PC-9 (cell line): ENCODE measurements at regions of chr13 and their contacts with region 1.

Region 1: GRCh38 chr13:44068737-44069136 is 189.0 kb downstream of the LACC1 start:
- DNase-seq: peak in 1 of 2 experiments; percentile 79
- H3K4me3 ChIP-seq: no peak overlapping the region
- H3K27ac ChIP-seq: peak overlapping the region; percentile 31
- H3K4me1 ChIP-seq: peaks cover 8% of the 10 kb centered on the region; the same call in 1 of the 2 replicates
- H3K27me3 ChIP-seq: no peaks in the 10 kb centered on the region
- CTCF ChIP-seq: no peak

Region 2: GRCh38 chr13:43744256-43745031 is 324.3 kb before region 1 on chr13:
- CTCF ChIA-PET with region 1: no interaction called
- POLR2A ChIA-PET with region 1: no interaction called
- intact Hi-C with region 1: no loop called
- DNase-seq: no peak
- H3K4me3 ChIP-seq: no peak overlapping the region
- H3K27ac ChIP-seq: no peak overlapping the region
- H3K4me1 ChIP-seq: no peaks in the 10 kb centered on the region
- H3K27me3 ChIP-seq: no peaks in the 10 kb centered on the region
- CTCF ChIP-seq: no peak

Region 3: DNA sequence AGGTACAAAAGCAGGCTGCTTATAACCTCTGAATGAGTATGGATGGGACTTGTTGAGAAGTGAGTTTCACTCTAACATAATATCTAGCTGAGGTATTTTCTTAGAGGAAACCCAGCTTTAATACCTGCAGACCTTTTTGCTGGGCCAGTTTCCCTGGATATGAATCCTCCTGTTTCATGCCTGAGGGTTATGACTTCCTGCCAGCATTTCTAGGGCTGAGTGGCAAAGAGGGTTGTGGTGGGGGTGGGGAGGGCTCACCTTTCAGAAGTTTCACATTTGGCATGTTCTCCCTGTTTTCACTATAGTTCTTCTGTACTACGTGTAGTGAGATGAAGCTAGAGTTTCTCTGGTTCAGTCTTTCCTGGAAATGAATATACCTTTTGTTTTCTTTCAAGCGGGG is 115.4 kb before region 1 on chr13:
- CTCF ChIA-PET with region 1: no interaction called
- POLR2A ChIA-PET with region 1: no interaction called
- intact Hi-C with region 1: no loop called
- DNase-seq: peak in 1 of 2 experiments; percentile 21
- H3K4me3 ChIP-seq: no peak overlapping the region
- H3K27ac ChIP-seq: no peak overlapping the region
- H3K4me1 ChIP-seq: peaks cover 9% of the 10 kb centered on the region
- H3K27me3 ChIP-seq: no peaks in the 10 kb centered on the region
- CTCF ChIP-seq: no peak

Region 4: GRCh38 chr13:43981091-43981490 is 87.6 kb before region 1 on chr13:
- CTCF ChIA-PET with region 1: no interaction called
- POLR2A ChIA-PET with region 1: no interaction called
- intact Hi-C with region 1: no loop called
- DNase-seq: no peak
- H3K4me3 ChIP-seq: no peak overlapping the region
- H3K27ac ChIP-seq: no peak overlapping the region
- H3K4me1 ChIP-seq: no peaks in the 10 kb centered on the region
- H3K27me3 ChIP-seq: no peaks in the 10 kb centered on the region
- CTCF ChIP-seq: no peak

Region 5: DNA sequence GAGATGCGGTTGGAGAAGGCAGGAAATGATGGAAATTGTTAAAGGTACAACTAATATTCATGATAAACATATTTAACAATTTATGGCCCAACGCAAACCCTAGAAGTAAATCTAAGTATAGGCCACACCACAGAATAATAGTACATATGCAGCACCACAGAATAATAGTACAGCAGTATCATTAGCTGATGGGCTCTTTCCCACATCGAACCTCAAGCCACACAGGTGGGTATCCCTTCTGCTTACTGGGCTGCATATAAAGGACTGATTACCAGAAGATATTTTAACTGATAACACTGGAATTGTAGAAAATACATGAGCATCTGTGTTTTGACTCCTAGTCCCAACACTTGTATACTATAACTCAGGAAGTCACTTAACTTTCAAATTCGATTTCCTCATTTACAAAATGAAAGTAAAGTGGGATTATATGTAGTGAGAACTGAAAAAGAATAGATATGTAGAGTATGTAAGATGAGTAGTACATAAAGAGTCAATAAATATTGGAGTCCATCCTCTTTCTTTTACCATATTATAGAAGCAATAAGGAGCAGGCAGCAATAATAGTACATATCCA is 415.9 kb after region 1 on chr13:
- CTCF ChIA-PET with region 1: interaction called, 15 read pairs
- POLR2A ChIA-PET with region 1: no interaction called
- intact Hi-C with region 1: no loop called
- DNase-seq: no peak
- H3K4me3 ChIP-seq: no peak overlapping the region
- H3K27ac ChIP-seq: peak overlapping the region; percentile 28; the same call in 1 of the 2 replicates
- H3K4me1 ChIP-seq: peaks cover 3% of the 10 kb centered on the region; the same call in 1 of the 2 replicates
- H3K27me3 ChIP-seq: no peaks in the 10 kb centered on the region
- CTCF ChIP-seq: no peak